Calu3 (cell line): ENCODE measurements at regions of chr3 and their contacts with region 1.

Region 1: GRCh38 chr3:7546253-7546652 is 685.3 kb downstream of the GRM7 start:
- DNase-seq: peak; percentile 13
- H3K4me3 Mint-ChIP-seq: no peak overlapping the region
- H3K27ac Mint-ChIP-seq: no peak overlapping the region
- H3K4me1 Mint-ChIP-seq: no peaks in the 10 kb centered on the region
- H3K27me3 Mint-ChIP-seq: no peaks in the 10 kb centered on the region
- CTCF ChIP-seq: no peak

Region 2: DNA sequence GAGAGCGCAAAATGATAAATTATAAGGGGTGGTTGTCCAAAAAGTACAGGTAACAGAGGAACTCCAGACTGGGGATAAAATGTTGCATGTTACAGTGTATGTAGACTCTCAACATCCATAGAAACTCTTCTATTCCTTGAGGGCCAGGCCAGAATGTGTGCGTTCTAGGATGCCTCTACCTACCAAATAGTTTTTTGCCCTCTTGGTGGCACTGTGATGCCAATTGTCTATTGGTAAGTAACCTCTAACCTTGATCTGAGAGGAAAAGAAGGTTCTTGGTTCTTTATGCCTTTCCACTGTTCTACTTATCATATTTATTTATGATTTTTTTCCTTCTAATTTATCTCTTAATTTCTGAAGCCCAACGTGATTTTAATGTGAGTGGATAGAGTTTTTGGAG is 260.7 kb before region 1 on chr3:
- CTCF ChIA-PET with region 1: no interaction called
- intact Hi-C with region 1: loop called (anchors 2 kb)
- DNase-seq: no peak
- H3K4me3 Mint-ChIP-seq: no peak overlapping the region
- H3K27ac Mint-ChIP-seq: no peak overlapping the region
- H3K4me1 Mint-ChIP-seq: no peaks in the 10 kb centered on the region
- H3K27me3 Mint-ChIP-seq: no peaks in the 10 kb centered on the region
- CTCF ChIP-seq: no peak

Region 3: GRCh38 chr3:7407107-7407506 is 139.1 kb before region 1 on chr3:
- CTCF ChIA-PET with region 1: no interaction called
- intact Hi-C with region 1: loop called (anchors 5 kb)
- DNase-seq: no peak
- H3K4me3 Mint-ChIP-seq: no peak overlapping the region
- H3K27ac Mint-ChIP-seq: no peak overlapping the region
- H3K4me1 Mint-ChIP-seq: no peaks in the 10 kb centered on the region
- H3K27me3 Mint-ChIP-seq: no peaks in the 10 kb centered on the region
- CTCF ChIP-seq: peak; percentile 19

Region 4: DNA sequence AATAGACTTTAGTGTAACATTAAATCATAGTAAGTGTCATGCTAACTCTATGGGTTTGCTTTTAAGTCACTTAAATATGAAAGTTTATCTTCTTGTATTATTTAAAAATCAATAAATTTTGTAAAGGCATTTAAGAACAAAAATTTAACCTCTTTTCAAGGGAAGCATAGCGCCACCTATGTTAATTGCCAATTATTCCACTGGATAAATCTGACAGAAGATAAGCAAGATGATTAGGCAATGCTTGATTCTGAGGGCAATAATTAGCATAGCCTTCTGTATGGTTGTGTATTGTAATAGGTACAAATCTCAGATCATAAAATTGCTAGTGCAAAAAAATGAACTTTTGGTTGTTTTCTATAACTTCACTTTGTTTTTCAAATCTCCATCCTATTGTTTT is 125.2 kb before region 1 on chr3:
- CTCF ChIA-PET with region 1: no interaction called
- intact Hi-C with region 1: loop called (anchors 1 kb)
- DNase-seq: no peak
- H3K4me3 Mint-ChIP-seq: no peak overlapping the region
- H3K27ac Mint-ChIP-seq: no peak overlapping the region
- H3K4me1 Mint-ChIP-seq: no peaks in the 10 kb centered on the region
- H3K27me3 Mint-ChIP-seq: no peaks in the 10 kb centered on the region
- CTCF ChIP-seq: no peak

Region 5: GRCh38 chr3:7504886-7505775 is 41.1 kb before region 1 on chr3:
- CTCF ChIA-PET with region 1: no interaction called
- intact Hi-C with region 1: loop called (anchors 1 kb)
- DNase-seq: peak; percentile 74
- H3K4me3 Mint-ChIP-seq: peak overlapping the region; percentile 21
- H3K27ac Mint-ChIP-seq: peak overlapping the region; percentile 96
- H3K4me1 Mint-ChIP-seq: peaks cover 60% of the 10 kb centered on the region
- H3K27me3 Mint-ChIP-seq: no peaks in the 10 kb centered on the region
- CTCF ChIP-seq: no peak

Region 6: GRCh38 chr3:7787871-7788828 is 241.9 kb after region 1 on chr3:
- CTCF ChIA-PET with region 1: no interaction called
- intact Hi-C with region 1: loop called (anchors 5 kb)
- DNase-seq: peak; percentile 26
- H3K4me3 Mint-ChIP-seq: no peak overlapping the region
- H3K27ac Mint-ChIP-seq: peak overlapping the region; percentile 76
- H3K4me1 Mint-ChIP-seq: peaks cover 29% of the 10 kb centered on the region
- H3K27me3 Mint-ChIP-seq: no peaks in the 10 kb centered on the region
- CTCF ChIP-seq: no peak